ENCODE measurements at regions of chr19 and their contacts with region 1.

Region 1: GRCh38 chr19:5953680-5954213 is 24.2 kb downstream of the RANBP3 start:
- DNase-seq: no peak
- ATAC-seq: peak in 1 of 8 donors; percentile 10
- H3K4me3 ChIP-seq: no peak overlapping the region
- H3K27ac ChIP-seq: peak overlapping the region; percentile 33 to 82 (median 68)
- H3K4me1 ChIP-seq: peaks cover 37 to 100% (median 96%) of the 10 kb centered on the region in 9 donors
- H3K27me3 ChIP-seq: no peaks in the 10 kb centered on the region
- CTCF ChIP-seq: no peak

Region 2: DNA sequence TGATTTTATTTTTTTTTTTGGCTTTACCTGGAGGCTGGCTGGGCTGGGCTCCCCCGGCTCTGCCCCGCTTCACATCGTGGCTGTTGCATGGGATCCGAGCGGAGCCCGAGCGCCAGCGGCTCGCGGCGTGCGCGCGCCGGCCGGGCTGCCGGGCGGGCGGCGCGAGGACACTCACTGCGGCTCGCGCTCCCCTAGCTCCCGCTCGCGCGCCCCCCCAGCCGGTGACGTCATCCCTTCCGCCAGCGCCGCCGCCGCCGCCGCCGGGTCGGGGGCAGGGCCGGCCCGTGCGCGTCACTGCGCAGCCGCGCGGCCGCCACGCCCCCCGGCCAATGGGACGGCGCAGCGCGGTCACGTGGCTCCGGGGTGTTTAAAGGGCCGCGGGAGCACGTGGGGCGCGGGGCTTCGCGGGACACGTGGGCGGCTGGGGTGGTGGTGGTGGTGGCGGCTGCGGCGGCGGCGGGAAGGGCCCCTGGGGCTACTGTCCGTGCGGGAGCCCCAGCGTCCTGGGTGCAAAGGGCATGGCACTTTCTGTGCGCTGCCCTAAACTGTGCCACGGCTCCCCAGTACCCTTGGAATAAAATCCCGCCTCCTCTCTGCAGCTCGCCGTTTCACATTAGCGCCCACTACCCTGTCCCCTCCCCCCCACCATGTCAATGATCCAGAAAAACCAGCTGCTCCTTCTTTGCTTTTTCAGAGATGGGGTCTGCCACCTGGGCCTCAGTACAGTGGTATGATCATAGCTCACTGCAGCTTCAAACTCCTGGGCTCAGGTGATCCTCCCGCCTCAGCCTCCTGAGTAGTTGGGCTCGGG is 612.9 kb before region 1 on chr19 and contains the start of gene PTPRS:
- intact Hi-C with region 1: loop called in 1 of 10 experiments (anchors 10 kb)
- DNase-seq: peak; percentile 77 to 86
- ATAC-seq: peak; percentile 83 to 95 (median 86)
- H3K4me3 ChIP-seq: peak within 1 kb of the TSS; percentile 25 to 77 (median 58)
- H3K27ac ChIP-seq: no peak within 1 kb of the TSS
- H3K4me1 ChIP-seq: peaks cover 4 to 19% (median 6%) of the 10 kb centered on the region in 9 donors
- H3K27me3 ChIP-seq: peaks cover 7 to 75% (median 45%) of the 10 kb centered on the region in 7 donors
- CTCF ChIP-seq: no peak
- total RNA-seq, gene PTPRS: 25.5 to 74.7 (median 33.1) TPM

Region 3: DNA sequence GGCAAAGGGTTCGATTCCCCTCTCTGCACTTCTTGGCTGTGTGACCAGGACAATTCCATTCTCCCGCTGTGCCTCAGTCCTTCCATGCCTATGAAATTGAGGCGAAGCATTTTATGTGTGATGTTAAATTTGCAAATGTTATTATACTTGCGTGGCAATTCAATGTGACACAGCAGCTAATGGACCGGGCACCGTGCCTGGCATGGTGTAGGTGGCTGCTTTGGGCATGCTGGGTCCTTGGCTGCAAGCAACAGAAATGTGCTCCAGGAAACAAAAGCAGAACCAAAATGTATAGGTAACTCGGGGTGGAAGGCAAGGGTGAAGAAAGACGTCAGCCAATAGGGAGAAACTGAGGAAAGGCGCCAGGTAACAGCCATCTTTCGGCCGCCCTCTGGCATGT is 423.0 kb before region 1 on chr19:
- intact Hi-C with region 1: no loop called
- DNase-seq: no peak
- ATAC-seq: no peak
- H3K4me3 ChIP-seq: no peak overlapping the region
- H3K27ac ChIP-seq: no peak overlapping the region
- H3K4me1 ChIP-seq: no peaks in the 10 kb centered on the region
- H3K27me3 ChIP-seq: peaks cover 0 to 24% (median 6%) of the 10 kb centered on the region in 7 donors
- CTCF ChIP-seq: no peak

Measured in heart right ventricle (tissue), 16 donors.